BJ (cell line): ENCODE measurements at regions of chr12 and their contacts with region 1.

Region 1: DNA sequence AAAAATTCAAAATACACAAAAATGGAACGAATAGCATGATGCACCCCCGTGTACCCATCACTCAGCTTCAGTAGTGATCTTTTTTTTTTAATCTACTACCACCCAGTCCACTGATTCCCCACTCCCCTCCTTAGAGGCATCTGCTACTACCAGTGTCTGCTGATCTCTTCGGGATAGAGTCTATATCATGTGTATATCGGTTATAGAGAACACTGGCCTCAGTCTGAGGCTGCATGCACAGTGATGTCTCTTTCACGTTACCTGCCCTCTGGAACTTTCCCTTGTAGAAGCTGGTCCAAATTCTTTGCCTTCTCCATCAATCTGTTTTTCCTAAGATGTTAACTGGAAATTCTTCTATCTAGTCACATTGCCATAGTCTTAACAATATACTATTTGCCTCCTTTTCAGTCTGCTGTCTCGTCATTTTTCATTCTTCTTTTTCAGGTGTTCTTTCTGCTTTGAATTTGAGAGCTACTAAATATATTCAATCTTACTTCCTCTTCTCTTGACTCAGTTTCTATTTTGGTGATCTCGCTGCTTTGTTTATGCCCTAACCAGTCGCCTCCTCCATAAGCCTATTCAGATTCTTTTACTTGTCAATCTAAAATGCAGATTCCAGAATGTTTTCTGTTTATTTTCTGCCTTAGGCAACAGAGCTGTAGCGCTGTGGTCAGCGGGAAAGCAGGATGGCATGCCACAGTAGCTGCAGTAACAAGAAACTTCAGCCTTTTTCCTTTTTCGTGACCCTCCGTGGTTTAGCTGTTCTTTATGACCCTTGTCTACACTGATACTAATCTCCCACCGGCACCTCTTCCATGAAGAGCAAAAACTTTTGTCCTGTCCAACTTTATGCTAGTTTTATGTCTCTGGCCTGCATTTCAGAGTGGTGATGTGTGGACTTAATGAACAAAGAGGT is 67.0 kb downstream of the FBXW8 start:
- DNase-seq: no peak
- H3K4me3 ChIP-seq: no peak overlapping the region
- H3K27me3 ChIP-seq: no peaks in the 10 kb centered on the region
- CTCF ChIP-seq: no peak

Region 2: DNA sequence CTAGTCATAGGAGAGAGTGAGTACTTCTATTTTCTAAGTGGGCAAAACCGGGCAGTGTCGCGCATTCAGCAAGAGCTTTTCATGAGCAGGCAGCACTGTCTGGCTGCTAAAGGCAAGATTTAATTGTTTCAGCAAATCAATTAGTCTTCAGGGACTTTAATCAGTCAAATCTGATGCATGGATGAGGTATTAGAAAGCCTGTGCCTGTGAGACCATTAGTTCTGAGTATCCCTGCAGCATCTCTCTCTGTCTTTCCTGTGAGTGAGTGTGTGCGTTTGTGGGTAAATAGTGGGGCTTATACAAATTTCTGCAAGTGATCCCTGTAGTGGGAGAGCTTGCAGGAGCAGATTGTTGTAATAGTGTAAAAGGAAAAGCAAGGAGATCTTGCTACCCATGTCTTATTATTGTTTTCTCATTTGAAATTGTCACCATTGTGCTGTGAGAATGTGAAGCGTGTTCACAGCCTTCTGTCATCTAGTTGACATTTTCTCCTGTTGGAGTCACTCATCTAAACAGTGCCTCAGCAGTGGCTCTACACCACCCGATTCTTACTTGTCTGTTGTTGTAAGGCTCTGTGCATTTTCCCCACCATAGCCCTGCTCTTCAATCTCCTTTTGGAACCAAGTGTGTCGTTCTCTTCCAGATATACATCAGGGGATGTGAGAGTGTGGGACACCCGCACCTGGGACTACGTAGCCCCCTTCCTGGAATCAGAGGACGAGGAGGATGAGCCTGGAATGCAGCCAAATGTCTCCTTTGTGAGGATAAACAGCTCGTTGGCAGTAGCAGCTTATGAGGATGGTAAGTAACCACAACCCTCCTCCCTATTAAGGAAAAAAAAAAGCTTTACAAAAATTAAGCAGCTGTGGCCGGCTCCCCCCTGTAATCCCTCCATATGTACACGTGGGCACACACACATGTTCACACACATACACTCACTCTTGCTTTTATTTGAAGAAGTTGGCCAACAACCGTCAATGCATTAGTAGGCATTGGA is 13.4 kb before region 1 on chr12:
- CTCF ChIA-PET with region 1: interaction called, 13 read pairs
- POLR2A ChIA-PET with region 1: no interaction called
- DNase-seq: no peak
- H3K4me3 ChIP-seq: no peak overlapping the region
- H3K27me3 ChIP-seq: no peaks in the 10 kb centered on the region
- CTCF ChIP-seq: no peak